ENCODE measurements at regions of chr11 and their contacts with region 1.

Region 1: GRCh38 chr11:18634140-18635032 is at the start of gene SPTY2D1:
- DNase-seq: peak; percentile 100
- ATAC-seq: peak; percentile 98
- H3K4me3 Mint-ChIP-seq: peak within 1 kb of the TSS; percentile 92
- H3K27ac Mint-ChIP-seq: peak within 1 kb of the TSS; percentile 98
- H3K4me1 Mint-ChIP-seq: peaks cover 21% of the 10 kb centered on the region
- H3K27me3 Mint-ChIP-seq: no peaks in the 10 kb centered on the region
- total RNA-seq, gene SPTY2D1: 25.7 to 26.0 TPM

Region 2: GRCh38 chr11:18383388-18384156 is 250.8 kb before region 1 on chr11:
- CTCF ChIA-PET with region 1: no interaction called
- POLR2A ChIA-PET with region 1: interaction called, 10 read pairs
- DNase-seq: peak; percentile 82
- ATAC-seq: peak; percentile 78
- H3K4me3 Mint-ChIP-seq: peak overlapping the region; percentile 69
- H3K27ac Mint-ChIP-seq: peak overlapping the region; percentile 99
- H3K4me1 Mint-ChIP-seq: peaks cover 51% of the 10 kb centered on the region
- H3K27me3 Mint-ChIP-seq: no peaks in the 10 kb centered on the region

Region 3: DNA sequence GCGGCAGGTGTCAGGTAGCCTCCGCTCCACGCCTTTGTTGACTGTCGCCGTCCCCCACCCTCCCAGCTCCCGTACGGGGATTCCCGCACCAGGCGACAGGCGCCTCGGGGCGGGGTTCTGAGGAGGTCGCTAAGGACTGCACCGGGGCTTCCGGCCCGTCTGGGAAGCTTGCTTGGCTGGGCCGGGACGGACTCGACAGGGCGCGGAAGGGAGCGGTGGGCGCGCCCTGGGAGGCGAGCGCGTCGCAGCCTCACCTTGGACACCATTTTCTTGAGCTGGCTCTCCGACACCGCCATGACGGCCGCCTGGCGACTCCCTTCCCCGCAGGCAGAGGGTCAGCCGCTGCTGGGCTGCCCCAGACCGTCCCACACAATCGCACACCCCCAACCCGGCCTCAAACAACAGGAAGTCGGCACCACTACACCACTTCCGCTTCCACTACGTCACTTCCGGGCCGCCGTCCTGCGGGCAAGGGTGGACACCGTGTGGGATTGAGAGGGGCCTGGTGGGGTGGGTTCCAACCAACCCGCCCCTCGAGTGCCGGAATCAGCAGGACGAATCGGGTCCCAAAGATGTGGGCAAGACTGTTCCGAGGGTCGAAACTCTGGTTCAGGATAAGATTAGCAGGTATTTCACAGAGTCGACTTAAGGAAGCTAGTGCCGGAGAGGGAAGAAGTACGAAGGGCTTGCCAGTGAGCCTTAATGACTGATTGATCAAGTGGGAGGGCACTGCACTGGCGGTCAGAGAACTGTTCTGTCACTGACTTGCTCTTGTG is 107.7 kb before region 1 on chr11 and contains the start of gene TSG101:
- CTCF ChIA-PET with region 1: interaction called, 4 read pairs
- POLR2A ChIA-PET with region 1: interaction called, 25 read pairs
- DNase-seq: peak; percentile 93
- ATAC-seq: peak; percentile 81
- H3K4me3 Mint-ChIP-seq: peak within 1 kb of the TSS; percentile 99
- H3K27ac Mint-ChIP-seq: peak within 1 kb of the TSS; percentile 99
- H3K4me1 Mint-ChIP-seq: peaks cover 33% of the 10 kb centered on the region
- H3K27me3 Mint-ChIP-seq: no peaks in the 10 kb centered on the region
- total RNA-seq, gene TSG101: 33.5 to 48.7 TPM

Region 4: DNA sequence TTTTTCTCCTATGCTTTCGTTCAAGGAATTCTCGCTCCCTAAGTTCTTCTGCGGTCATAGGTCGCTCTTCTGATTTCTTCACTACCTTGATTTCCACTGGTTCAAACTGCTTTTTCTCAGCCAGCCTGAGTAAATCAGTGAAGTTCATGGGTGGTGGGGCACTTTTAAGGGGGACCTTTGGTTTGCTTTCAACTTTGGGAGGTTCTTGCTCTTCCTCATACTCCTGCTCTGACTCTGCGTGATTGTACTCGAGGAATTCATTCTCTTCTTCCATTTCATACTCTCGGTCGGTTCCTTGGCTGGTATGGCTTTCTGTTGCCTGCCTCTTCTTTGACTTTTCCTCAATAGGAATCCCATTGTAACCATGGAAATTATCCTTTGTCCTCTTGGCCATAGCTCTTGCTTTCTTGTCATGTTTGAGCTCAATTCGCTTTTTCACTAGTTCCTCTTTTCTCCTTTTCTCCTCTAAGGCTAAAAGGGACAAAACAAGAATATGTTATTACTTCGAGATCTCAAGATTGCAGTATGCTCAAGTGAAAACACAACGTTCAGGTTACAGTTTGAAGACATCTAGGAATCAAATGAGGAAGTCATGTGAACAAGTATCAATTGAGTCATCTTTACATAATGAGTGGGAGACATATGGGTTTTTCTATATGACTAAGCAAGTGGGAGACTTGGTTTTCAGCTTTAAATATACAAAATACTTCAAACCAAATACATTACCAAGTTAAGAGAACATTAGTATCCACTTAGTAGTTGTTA is 18.6 kb before region 1 on chr11:
- CTCF ChIA-PET with region 1: interaction called, 16 read pairs
- POLR2A ChIA-PET with region 1: interaction called, 37 read pairs
- DNase-seq: no peak
- ATAC-seq: peak; percentile 47
- H3K4me3 Mint-ChIP-seq: no peak overlapping the region
- H3K27ac Mint-ChIP-seq: no peak overlapping the region
- H3K4me1 Mint-ChIP-seq: peaks cover 43% of the 10 kb centered on the region
- H3K27me3 Mint-ChIP-seq: no peaks in the 10 kb centered on the region

Region 5: DNA sequence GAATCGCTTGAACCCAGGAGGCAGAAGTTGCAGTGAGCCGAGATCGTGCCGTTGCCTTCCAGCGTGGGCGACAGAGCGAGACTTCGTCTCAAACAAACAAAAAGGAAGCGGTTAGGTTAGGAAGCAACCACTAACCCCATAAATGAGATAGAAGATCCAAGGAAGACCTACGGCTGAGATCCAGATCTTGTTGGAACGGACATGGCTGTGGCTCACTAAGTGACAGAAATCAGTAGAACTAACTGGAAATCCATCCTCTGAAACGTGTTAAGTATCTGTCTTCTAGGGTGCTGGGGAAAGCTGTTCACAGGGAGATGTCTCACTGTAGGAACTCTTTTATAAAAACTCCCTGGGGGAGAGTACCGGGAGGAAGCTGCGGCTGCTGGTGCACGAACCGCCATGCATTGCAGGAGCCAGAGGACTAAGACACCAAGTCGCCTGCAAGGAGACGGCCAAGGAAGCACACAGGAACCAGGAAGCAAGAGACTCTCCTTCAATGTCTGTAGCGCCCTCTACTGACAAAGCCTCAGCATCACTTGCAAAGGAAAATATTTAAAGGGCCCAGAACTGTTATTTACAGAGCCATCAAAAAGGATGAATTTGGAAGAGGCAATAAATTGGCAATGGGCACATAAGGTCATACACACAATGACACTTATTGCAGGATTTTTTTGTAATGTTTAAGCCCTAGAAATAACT is 16.6 kb after region 1 on chr11:
- CTCF ChIA-PET with region 1: interaction called, 12 read pairs
- POLR2A ChIA-PET with region 1: no interaction called
- DNase-seq: peak; percentile 65
- ATAC-seq: peak; percentile 33
- H3K4me3 Mint-ChIP-seq: no peak overlapping the region
- H3K27ac Mint-ChIP-seq: no peak overlapping the region
- H3K4me1 Mint-ChIP-seq: peaks cover 9% of the 10 kb centered on the region
- H3K27me3 Mint-ChIP-seq: peaks cover 2% of the 10 kb centered on the region

Region 6: GRCh38 chr11:18878211-18878610 is 243.8 kb after region 1 on chr11:
- CTCF ChIA-PET with region 1: no interaction called
- POLR2A ChIA-PET with region 1: no interaction called
- DNase-seq: no peak
- ATAC-seq: no peak
- H3K4me3 Mint-ChIP-seq: no peak overlapping the region
- H3K27ac Mint-ChIP-seq: no peak overlapping the region
- H3K4me1 Mint-ChIP-seq: no peaks in the 10 kb centered on the region
- H3K27me3 Mint-ChIP-seq: peaks cover 19% of the 10 kb centered on the region

Measured in activated CD8-positive, alpha-beta T cell treated with anti-CD3 and anti-CD28 coated beads, Interleukin-2, amount 10 ng/mL, durations not matched to agents 7 days and 5 days (primary cell).